CD8-positive, alpha-beta memory T cell (primary cell): ENCODE measurements at regions of chr5 and their contacts with region 1.

Region 1: GRCh38 chr5:180831139-180832048 is 28.8 kb upstream of the MGAT1 start:
- DNase-seq: peak; percentile 65 to 80 (median 72)
- H3K4me3 ChIP-seq: peak overlapping the region; percentile 93
- H3K4me3 Mint-ChIP-seq: peak overlapping the region; percentile 89 to 99 (median 96)
- H3K27ac ChIP-seq: peak overlapping the region; percentile 89
- H3K27ac Mint-ChIP-seq: peak overlapping the region; percentile 94 to 99 (median 98)
- H3K4me1 ChIP-seq: peaks cover 50% of the 10 kb centered on the region
- H3K4me1 Mint-ChIP-seq: peaks cover 38 to 65% (median 63%) of the 10 kb centered on the region in 3 donors
- H3K27me3 ChIP-seq: no peaks in the 10 kb centered on the region
- H3K27me3 Mint-ChIP-seq: no peaks in the 10 kb centered on the region

Region 2: GRCh38 chr5:180775624-180776023 is 55.8 kb before region 1 on chr5:
- CTCF ChIA-PET with region 1: no interaction called
- POLR2A ChIA-PET with region 1: no interaction called
- DNase-seq: no peak
- H3K4me3 ChIP-seq: no peak overlapping the region
- H3K4me3 Mint-ChIP-seq: no peak overlapping the region
- H3K27ac ChIP-seq: no peak overlapping the region
- H3K27ac Mint-ChIP-seq: no peak overlapping the region
- H3K4me1 ChIP-seq: no peaks in the 10 kb centered on the region
- H3K4me1 Mint-ChIP-seq: no peaks in the 10 kb centered on the region
- H3K27me3 ChIP-seq: no peaks in the 10 kb centered on the region
- H3K27me3 Mint-ChIP-seq: peaks cover 10 to 23% of the 10 kb centered on the region in 2 donors

Region 3: GRCh38 chr5:180802325-180803180 is 28.8 kb before region 1 on chr5 and contains the start of gene MGAT1:
- CTCF ChIA-PET with region 1: interaction called, 16 read pairs
- POLR2A ChIA-PET with region 1: interaction called, 62 read pairs
- DNase-seq: peak; percentile 65 to 80 (median 74)
- H3K4me3 ChIP-seq: peak within 1 kb of the TSS; percentile 88
- H3K4me3 Mint-ChIP-seq: peak within 1 kb of the TSS; percentile 89 to 100 (median 96)
- H3K27ac ChIP-seq: peak within 1 kb of the TSS; percentile 86
- H3K27ac Mint-ChIP-seq: peak within 1 kb of the TSS; percentile 89 to 97 (median 95)
- H3K4me1 ChIP-seq: peaks cover 84% of the 10 kb centered on the region
- H3K4me1 Mint-ChIP-seq: peaks cover 79 to 84% (median 81%) of the 10 kb centered on the region in 3 donors
- H3K27me3 ChIP-seq: no peaks in the 10 kb centered on the region
- H3K27me3 Mint-ChIP-seq: peaks cover 0 to 2% of the 10 kb centered on the region in 2 donors
- total RNA-seq, gene MGAT1: 125 to 132 TPM

Region 4: DNA sequence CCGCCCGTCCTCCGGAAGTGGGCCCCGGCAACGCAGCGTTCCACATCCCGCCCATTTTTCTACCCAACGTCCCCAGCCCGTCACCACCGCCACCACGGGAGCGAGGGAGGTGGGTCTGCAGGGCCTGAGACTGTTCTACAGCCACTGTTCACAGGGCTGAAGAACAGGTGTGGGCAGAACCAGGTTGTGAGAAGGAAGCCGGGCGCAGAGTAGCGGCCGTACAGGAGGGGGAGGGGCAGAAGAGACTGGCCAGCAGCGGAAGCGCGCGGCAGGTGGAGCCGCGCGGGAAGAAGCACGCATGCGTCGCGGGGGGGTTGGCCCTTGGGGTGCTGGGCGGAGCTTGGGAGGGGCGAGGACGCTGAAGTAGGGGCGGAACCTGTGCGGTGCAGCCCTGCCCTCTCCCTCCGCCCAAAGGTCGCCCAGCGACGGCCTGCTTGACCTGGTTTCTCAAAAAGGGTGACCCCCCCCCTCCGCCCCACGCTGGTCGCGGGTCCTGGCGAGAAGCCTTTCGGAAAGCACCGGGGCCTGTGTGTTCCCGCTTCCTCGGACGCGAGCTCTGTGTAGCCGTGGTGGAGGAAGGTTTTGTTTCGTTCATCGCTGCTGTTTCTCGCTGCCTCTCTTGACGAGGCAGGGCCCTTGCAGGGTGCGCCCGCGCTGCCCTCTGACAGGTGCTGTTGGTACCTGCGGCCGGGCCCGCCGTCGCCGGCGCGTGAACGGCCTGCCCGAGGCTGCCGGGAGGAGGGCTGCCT is 21.0 kb before region 1 on chr5:
- CTCF ChIA-PET with region 1: interaction called, 22 read pairs
- POLR2A ChIA-PET with region 1: interaction called, 108 read pairs
- DNase-seq: peak; percentile 94 to 98 (median 97)
- H3K4me3 ChIP-seq: peak overlapping the region; percentile 87
- H3K4me3 Mint-ChIP-seq: peak overlapping the region; percentile 82 to 99 (median 89)
- H3K27ac ChIP-seq: peak overlapping the region; percentile 93
- H3K27ac Mint-ChIP-seq: peak overlapping the region; percentile 93 to 100 (median 98)
- H3K4me1 ChIP-seq: peaks cover 58% of the 10 kb centered on the region
- H3K4me1 Mint-ChIP-seq: peaks cover 67 to 74% (median 68%) of the 10 kb centered on the region in 3 donors
- H3K27me3 ChIP-seq: no peaks in the 10 kb centered on the region
- H3K27me3 Mint-ChIP-seq: no peaks in the 10 kb centered on the region

Region 5: GRCh38 chr5:180860887-180861822 is 29.8 kb after region 1 on chr5 and contains the start of gene ZFP62:
- CTCF ChIA-PET with region 1: interaction called, 13 read pairs
- POLR2A ChIA-PET with region 1: interaction called, 46 read pairs
- DNase-seq: peak; percentile 77 to 90 (median 86)
- H3K4me3 ChIP-seq: peak within 1 kb of the TSS; percentile 93
- H3K4me3 Mint-ChIP-seq: peak within 1 kb of the TSS; percentile 89 to 98 (median 94)
- H3K27ac ChIP-seq: peak within 1 kb of the TSS; percentile 86
- H3K27ac Mint-ChIP-seq: peak within 1 kb of the TSS; percentile 85 to 99 (median 94)
- H3K4me1 ChIP-seq: peaks cover 12% of the 10 kb centered on the region
- H3K4me1 Mint-ChIP-seq: peaks cover 16 to 29% (median 25%) of the 10 kb centered on the region in 3 donors
- H3K27me3 ChIP-seq: no peaks in the 10 kb centered on the region
- H3K27me3 Mint-ChIP-seq: peaks cover 4 to 5% of the 10 kb centered on the region in 2 donors
- total RNA-seq, gene ZFP62: 27.6 to 34.1 TPM

Region 6: GRCh38 chr5:180982008-180982741 is 150.8 kb after region 1 on chr5:
- CTCF ChIA-PET with region 1: no interaction called
- POLR2A ChIA-PET with region 1: no interaction called
- DNase-seq: no peak
- H3K4me3 ChIP-seq: no peak overlapping the region
- H3K4me3 Mint-ChIP-seq: no peak overlapping the region
- H3K27ac ChIP-seq: no peak overlapping the region
- H3K27ac Mint-ChIP-seq: no peak overlapping the region
- H3K4me1 ChIP-seq: no peaks in the 10 kb centered on the region
- H3K4me1 Mint-ChIP-seq: no peaks in the 10 kb centered on the region
- H3K27me3 ChIP-seq: no peaks in the 10 kb centered on the region
- H3K27me3 Mint-ChIP-seq: peaks cover 2 to 41% of the 10 kb centered on the region in 2 donors

Region 7: DNA sequence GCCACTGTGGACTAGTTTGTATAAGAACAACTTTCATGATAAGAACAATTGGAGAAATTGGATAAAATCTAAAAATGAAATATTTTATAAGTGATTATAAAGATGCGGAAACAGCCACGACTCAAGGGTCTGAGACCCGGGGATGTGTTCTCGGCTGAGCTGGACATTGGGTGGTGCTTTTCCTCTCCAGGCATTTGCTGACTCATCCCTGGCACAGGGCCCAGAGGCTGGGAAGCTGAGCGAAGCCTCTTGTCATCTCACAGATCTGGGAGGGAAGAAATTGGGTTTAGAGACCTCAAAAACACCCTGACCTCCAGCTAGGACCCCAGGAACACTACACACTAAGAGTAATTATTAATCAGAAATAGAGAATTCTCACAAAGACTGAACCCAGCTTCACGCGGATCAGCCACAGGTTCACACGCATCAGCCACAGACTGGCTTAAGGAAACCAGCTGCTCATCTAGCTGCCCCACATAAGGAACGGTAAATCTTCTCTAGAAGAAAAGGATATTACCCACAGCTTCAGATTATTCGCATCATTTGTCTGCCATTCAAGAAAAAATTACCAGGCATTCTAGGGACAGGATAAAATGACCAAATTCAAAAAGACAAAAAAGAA is 302.3 kb after region 1 on chr5:
- CTCF ChIA-PET with region 1: no interaction called
- POLR2A ChIA-PET with region 1: no interaction called
- DNase-seq: no peak
- H3K4me3 ChIP-seq: no peak overlapping the region
- H3K4me3 Mint-ChIP-seq: no peak overlapping the region
- H3K27ac ChIP-seq: no peak overlapping the region
- H3K27ac Mint-ChIP-seq: no peak overlapping the region
- H3K4me1 ChIP-seq: no peaks in the 10 kb centered on the region
- H3K4me1 Mint-ChIP-seq: peaks cover 0 to 5% (median 0%) of the 10 kb centered on the region in 3 donors
- H3K27me3 ChIP-seq: no peaks in the 10 kb centered on the region
- H3K27me3 Mint-ChIP-seq: peaks cover 23 to 34% of the 10 kb centered on the region in 2 donors